Endothelial cell of umbilical vein (primary cell): ENCODE measurements at regions of chr4 and their contacts with region 1.

Region 1: GRCh38 chr4:116489739-116490138 is 595.6 kb downstream of the TRAM1L1 start:
- DNase-seq: no peak
- H3K4me3 ChIP-seq: no peak overlapping the region
- H3K27ac ChIP-seq: no peak overlapping the region
- H3K4me1 ChIP-seq: no peaks in the 10 kb centered on the region
- H3K27me3 ChIP-seq: no peaks in the 10 kb centered on the region
- CTCF ChIP-seq: no peak
- POLR2A ChIP-seq: no peak

Region 2: GRCh38 chr4:116438417-116438816 is 51.3 kb before region 1 on chr4:
- CTCF ChIA-PET with region 1: no interaction called
- POLR2A ChIA-PET with region 1: no interaction called
- dilution Hi-C with region 1: no loop called
- intact Hi-C with region 1: no loop called
- DNase-seq: no peak
- H3K4me3 ChIP-seq: no peak overlapping the region
- H3K27ac ChIP-seq: no peak overlapping the region
- H3K4me1 ChIP-seq: no peaks in the 10 kb centered on the region
- H3K27me3 ChIP-seq: no peaks in the 10 kb centered on the region
- CTCF ChIP-seq: no peak
- POLR2A ChIP-seq: no peak

Region 3: DNA sequence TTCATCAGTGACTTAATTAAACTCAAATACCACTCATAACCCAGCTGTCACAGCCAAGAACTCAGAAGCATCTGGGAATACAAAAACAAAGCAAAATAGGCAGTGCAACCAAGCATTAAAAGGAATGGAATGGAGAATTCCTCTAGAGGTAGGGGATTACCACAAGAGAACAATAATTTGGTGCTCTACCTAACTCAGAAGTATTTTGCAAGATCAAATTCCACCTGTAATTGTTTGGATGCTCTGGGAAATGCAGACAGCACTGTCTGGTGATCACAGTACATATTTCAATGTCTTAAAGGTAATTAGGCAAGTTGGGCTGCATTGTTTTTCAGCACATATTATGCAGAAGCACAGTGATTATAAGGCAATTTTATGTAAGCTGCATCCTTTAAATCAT is 48.1 kb after region 1 on chr4:
- CTCF ChIA-PET with region 1: no interaction called
- POLR2A ChIA-PET with region 1: no interaction called
- dilution Hi-C with region 1: no loop called
- intact Hi-C with region 1: loop called (anchors 1 kb)
- DNase-seq: no peak
- H3K4me3 ChIP-seq: no peak overlapping the region
- H3K27ac ChIP-seq: no peak overlapping the region
- H3K4me1 ChIP-seq: no peaks in the 10 kb centered on the region
- H3K27me3 ChIP-seq: no peaks in the 10 kb centered on the region
- CTCF ChIP-seq: no peak
- POLR2A ChIP-seq: no peak

Region 4: GRCh38 chr4:116788723-116789122 is 299.0 kb after region 1 on chr4:
- CTCF ChIA-PET with region 1: no interaction called
- POLR2A ChIA-PET with region 1: no interaction called
- dilution Hi-C with region 1: no loop called
- intact Hi-C with region 1: no loop called
- DNase-seq: no peak
- H3K4me3 ChIP-seq: no peak overlapping the region
- H3K27ac ChIP-seq: no peak overlapping the region
- H3K4me1 ChIP-seq: no peaks in the 10 kb centered on the region
- H3K27me3 ChIP-seq: no peaks in the 10 kb centered on the region
- CTCF ChIP-seq: no peak
- POLR2A ChIP-seq: no peak